ENCODE measurements at regions of chr12 and their contacts with region 1.

Region 1: DNA sequence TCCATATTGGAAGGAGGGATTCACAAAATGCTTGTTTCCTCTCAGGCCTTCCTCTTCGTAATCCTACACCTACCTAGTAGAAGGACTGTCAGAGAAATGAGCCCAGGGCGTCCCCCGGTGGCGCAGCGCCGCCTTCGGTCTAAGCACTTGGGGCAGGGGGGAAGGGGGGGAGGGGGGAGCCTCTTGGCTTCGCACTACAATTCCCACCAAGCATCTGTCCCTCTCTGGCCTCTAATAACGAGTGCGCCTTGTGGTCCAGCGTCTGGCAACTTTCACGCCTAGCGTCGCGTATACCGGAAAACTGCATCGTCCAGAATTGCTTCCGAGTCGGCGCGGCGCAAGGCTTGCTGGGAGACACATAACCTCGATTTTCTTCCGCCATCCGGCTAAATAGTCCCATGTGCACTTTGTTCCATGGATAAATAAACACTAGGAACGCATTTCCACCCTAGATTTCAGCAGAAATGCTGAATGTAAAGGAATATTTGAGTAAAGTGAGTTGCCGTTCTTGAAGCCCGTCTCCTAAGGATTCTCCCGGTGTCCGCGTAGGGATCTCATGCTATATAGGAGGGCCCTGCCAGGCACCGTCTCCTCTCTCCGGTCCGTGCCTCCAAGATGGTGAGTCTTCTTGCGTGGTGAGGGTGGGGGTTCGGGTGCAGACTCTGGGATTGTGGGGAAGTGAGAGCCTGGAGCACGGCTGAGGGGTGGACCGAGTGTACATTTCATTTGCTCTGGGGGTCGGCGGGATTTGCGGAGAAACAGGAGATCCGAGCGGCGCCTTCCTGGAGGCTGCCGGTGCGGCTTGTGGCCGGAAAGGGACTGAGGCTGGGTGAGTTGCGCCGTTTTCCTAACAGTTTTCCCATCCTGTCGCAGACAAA is at the start of gene RPS26:
- DNase-seq: peak; percentile 94
- H3K4me3 Mint-ChIP-seq: peak within 1 kb of the TSS; percentile 100
- H3K27ac Mint-ChIP-seq: peak within 1 kb of the TSS; percentile 99
- H3K4me1 Mint-ChIP-seq: peaks cover 60% of the 10 kb centered on the region
- H3K27me3 Mint-ChIP-seq: no peaks in the 10 kb centered on the region
- total RNA-seq, gene RPS26: 30.4 to 35.0 TPM

Region 2: DNA sequence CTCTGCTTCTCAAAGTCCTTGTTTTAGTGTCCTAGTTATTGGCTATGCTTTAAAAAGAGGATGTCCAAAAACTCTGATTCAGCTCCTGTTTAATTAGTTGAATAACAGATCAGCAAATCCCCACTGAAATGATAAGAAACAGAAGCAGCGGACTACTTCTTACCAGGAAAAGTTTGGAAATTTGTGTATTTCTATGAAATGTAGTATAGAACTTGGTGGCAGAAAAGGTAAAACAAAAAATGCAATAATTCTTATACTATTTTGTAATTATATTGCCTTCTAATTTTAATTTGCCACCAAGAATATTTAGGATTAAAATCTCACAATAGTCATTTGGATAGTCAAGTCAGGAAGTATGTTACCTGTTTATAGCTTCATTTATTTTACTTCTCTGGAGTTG is 469.6 kb before region 1 on chr12 and contains the start of gene OR2AP1:
- CTCF ChIA-PET with region 1: no interaction called
- POLR2A ChIA-PET with region 1: no interaction called
- DNase-seq: no peak
- H3K4me3 Mint-ChIP-seq: no peak within 1 kb of the TSS
- H3K27ac Mint-ChIP-seq: no peak within 1 kb of the TSS
- H3K4me1 Mint-ChIP-seq: no peaks in the 10 kb centered on the region
- H3K27me3 Mint-ChIP-seq: no peaks in the 10 kb centered on the region
- total RNA-seq, gene OR2AP1: not detected

Region 3: DNA sequence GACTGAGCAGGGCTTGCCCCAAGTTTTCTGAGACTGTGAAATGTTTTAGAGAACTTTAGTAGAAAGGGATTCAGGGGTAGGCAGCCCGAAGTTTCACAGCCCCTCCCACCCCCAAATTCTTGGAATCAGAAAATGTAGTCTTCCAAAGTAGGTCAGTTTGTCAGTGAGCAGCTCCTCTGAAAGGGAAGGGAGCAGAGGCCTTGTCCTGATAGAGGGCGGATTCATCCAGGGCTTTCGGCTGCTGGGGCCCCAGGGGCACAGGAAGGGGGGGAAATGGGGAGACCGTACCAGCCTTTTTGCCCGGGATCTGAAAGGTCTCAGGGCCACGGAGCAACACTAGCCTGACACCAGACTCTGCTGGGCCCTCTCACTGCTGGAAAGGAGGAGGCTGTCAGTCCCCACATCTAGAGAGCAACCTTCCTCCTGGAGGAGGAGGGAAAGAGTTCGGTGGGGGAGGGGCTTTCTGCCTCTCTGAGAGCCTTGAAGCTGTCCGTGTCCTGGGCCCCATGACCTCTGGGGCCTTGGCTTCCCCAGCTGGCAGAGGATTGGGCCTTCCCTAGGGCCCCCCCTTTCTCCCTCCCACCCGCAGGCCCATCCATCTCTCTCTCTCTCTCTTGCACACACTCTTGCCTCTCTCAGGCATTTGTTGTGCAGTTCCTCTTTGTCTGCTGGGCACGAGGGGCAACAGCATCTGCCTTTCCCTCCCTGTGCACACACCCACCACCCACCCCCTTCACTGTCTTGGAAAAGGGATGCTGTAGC is 21.2 kb before region 1 on chr12 and contains the start of gene IKZF4:
- CTCF ChIA-PET with region 1: interaction called, 35 read pairs
- POLR2A ChIA-PET with region 1: interaction called, 10 read pairs
- DNase-seq: peak; percentile 32
- H3K4me3 Mint-ChIP-seq: peak within 1 kb of the TSS; percentile 98
- H3K27ac Mint-ChIP-seq: peak within 1 kb of the TSS; percentile 94
- H3K4me1 Mint-ChIP-seq: peaks cover 55% of the 10 kb centered on the region
- H3K27me3 Mint-ChIP-seq: no peaks in the 10 kb centered on the region
- total RNA-seq, gene IKZF4: 17.6 to 19.4 TPM

Region 4: DNA sequence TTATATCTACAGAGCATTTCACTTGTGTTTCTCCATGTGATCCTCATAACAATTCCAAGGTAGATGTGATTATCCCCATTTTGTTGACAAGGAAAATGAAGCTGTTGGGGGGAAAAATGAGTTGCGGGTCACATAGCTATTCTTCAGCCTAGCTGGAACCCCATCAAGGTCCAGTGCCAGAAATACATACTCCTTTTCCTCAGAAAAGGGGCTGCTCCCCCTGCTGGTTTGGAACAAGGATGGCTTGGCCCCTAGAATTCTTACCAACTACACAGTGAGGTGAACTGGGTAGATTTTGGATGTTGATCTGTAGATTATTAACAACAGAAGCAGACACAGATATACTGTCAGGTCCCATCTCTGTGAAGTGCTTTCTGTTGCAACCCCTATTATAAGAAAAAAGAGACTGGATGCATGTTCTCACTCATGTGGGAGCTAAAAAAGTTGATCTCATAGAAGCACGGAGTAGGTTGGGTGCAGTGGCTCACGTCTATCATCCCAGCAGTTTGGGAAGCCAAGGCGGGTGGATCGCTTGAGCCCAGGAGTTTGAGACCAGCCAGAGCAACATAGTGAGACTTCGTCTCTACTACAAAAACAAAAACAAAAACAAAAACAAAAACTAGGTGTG is 12.0 kb before region 1 on chr12:
- CTCF ChIA-PET with region 1: interaction called, 35 read pairs
- POLR2A ChIA-PET with region 1: interaction called, 4 read pairs
- DNase-seq: peak; percentile 52
- H3K4me3 Mint-ChIP-seq: no peak overlapping the region
- H3K27ac Mint-ChIP-seq: peak overlapping the region; percentile 21
- H3K4me1 Mint-ChIP-seq: peaks cover 53% of the 10 kb centered on the region
- H3K27me3 Mint-ChIP-seq: no peaks in the 10 kb centered on the region

Measured in activated CD4-positive, alpha-beta memory T cell treated with anti-CD3 and anti-CD28 coated beads, Interleukin-2, amount 10 ng/mL, durations not matched to agents 7 days and 5 days (primary cell).